Esophagus muscularis mucosa (tissue), 4 donors: ENCODE measurements at regions of chr15 and their contacts with region 1.

Region 1: DNA sequence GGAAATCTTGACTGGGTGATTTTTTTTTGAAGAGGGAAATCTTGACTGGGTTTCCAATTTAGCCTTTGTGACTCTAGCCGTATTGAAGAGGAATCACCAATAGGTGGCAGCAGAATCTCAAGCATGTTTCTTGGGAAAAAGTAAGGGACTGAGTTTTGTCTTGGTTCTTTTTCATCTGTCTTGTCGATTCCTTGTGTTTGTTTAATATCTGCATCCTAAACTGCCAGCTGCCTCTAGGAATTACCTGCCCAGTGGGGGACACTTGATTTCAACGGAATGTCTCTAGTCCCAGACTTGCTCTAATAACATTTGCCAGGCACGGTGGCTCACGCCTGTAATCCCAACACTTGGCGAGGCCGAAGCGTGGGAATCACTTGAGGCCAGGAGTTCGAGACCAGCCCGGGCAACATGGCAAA is 89.2 kb downstream of the RBPMS2 start:
- DNase-seq: no peak
- H3K4me3 ChIP-seq: no peak overlapping the region
- H3K27ac ChIP-seq: peak overlapping the region; percentile 22 to 85 (median 44)
- H3K4me1 ChIP-seq: peaks cover 45 to 78% (median 57%) of the 10 kb centered on the region in 4 donors
- H3K27me3 ChIP-seq: no peaks in the 10 kb centered on the region
- CTCF ChIP-seq: peak; percentile 59 to 84 (median 70)
- EP300 ChIP-seq: no peak
- POLR2A ChIP-seq: no peak

Region 2: DNA sequence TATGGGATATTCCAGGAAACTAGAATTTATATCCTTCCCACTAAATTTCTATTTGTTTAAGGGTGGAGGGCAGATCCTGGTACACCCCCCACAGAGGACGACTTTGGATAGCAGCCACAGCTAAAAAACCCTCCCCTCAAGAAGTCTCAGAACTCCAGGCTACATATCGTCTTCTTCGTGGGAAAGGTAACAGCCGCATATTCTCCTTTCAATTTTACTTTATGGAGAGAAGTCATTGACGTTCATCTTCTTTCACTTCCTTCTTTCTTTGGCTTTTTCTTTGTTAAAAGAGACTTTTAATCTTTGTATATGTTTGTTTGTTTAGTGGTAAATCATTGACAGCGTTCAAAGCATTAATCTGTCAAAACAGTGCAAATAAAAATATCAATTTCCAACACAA is 262.3 kb before region 1 on chr15:
- intact Hi-C with region 1: loop called (anchors 2 kb)
- DNase-seq: no peak
- H3K4me3 ChIP-seq: no peak overlapping the region
- H3K27ac ChIP-seq: no peak overlapping the region
- H3K4me1 ChIP-seq: peaks cover 0 to 10% (median 4%) of the 10 kb centered on the region in 4 donors
- H3K27me3 ChIP-seq: no peaks in the 10 kb centered on the region
- CTCF ChIP-seq: no peak
- EP300 ChIP-seq: no peak
- POLR2A ChIP-seq: no peak

Region 3: DNA sequence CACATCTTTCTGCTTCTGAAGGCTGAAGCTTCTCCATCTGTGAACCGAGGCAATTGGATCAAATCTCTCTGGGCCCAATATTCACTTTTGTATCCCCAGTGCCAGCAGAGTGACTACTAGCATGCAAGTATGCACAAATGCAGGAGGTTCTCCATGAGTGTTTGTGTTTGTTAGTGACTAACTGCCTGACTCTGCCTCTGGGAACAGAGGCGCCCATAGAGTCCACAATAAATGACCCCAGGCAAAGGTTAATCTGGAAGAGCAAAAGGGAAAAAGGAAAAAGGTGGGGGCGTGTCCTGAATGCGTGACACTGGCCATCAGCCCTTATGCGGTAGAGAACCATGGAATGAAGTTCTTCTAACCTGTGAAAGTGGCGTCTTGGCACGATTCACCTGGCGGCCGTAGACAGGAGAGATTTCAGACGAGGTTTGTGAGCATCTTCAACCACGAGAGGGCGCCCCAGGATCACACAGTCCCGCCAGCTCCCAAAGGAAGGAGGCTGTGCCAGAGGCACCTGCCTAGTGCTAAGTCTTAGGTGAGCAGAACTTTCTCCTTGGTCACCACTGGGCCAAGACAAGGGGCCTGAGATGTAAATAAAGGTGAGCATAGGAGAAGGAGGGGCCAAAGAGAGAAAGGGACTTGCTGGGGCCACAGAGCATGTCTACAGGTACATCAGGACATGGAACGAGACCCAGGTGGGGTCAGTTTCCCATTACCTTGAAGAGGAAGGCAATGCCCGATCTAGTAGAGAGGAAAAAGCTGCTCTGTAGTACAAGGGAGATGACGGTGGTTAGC is 45.0 kb after region 1 on chr15:
- intact Hi-C with region 1: loop called (anchors 1 kb)
- DNase-seq: no peak
- H3K4me3 ChIP-seq: no peak overlapping the region
- H3K27ac ChIP-seq: peak overlapping the region; percentile 29 to 65 (median 56)
- H3K4me1 ChIP-seq: peaks cover 8 to 29% (median 24%) of the 10 kb centered on the region in 4 donors
- H3K27me3 ChIP-seq: no peaks in the 10 kb centered on the region
- CTCF ChIP-seq: peak; percentile 84 to 91 (median 90)
- EP300 ChIP-seq: no peak
- POLR2A ChIP-seq: no peak

Region 4: DNA sequence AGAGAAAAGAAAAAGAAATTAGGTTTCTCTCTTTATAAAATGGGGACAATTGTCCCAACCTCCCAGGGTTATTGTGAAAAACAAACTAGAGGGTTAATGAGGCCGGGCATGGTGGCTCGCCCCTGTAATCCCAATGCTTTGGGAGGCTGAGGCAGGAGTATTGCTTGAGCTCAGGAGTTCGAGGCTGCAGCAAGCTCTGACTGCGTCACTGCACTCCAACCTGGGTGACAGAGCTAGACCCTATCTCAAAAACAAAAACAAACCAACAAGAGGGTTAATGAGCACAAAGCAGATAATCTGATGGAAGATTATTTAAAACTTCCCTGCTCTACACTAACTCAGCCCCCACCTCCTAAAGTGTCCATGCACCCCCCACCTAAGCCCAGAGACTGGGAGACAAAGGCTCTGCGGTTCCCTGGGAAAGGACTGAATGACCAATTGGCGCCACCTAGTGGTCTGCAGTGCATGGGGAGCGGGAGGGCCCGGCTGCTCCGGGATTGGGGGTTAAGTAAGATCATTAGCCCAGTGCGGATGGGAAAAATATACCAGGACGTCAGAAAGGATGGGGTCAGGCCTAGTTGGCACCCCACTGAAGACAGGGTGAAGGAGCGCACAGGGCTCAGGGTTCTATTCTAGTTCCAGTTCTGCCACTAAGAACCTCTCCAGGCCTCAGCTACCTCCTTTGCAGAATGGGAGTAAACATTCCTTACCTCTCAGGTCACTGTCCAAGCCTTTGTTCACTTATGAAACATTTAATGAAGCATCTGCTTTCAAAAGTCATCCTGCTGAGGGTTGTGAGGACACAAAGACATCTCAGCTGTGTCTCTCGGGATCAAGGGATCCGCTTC is 123.6 kb after region 1 on chr15:
- intact Hi-C with region 1: loop called (anchors 5 kb)
- DNase-seq: no peak
- H3K4me3 ChIP-seq: no peak overlapping the region
- H3K27ac ChIP-seq: peak overlapping the region; percentile 90 to 93 (median 92)
- H3K4me1 ChIP-seq: peaks cover 8 to 53% (median 45%) of the 10 kb centered on the region in 4 donors
- H3K27me3 ChIP-seq: no peaks in the 10 kb centered on the region
- CTCF ChIP-seq: peak in 2 of 3 experiments; percentile 95 to 96
- EP300 ChIP-seq: no peak
- POLR2A ChIP-seq: no peak

Region 5: DNA sequence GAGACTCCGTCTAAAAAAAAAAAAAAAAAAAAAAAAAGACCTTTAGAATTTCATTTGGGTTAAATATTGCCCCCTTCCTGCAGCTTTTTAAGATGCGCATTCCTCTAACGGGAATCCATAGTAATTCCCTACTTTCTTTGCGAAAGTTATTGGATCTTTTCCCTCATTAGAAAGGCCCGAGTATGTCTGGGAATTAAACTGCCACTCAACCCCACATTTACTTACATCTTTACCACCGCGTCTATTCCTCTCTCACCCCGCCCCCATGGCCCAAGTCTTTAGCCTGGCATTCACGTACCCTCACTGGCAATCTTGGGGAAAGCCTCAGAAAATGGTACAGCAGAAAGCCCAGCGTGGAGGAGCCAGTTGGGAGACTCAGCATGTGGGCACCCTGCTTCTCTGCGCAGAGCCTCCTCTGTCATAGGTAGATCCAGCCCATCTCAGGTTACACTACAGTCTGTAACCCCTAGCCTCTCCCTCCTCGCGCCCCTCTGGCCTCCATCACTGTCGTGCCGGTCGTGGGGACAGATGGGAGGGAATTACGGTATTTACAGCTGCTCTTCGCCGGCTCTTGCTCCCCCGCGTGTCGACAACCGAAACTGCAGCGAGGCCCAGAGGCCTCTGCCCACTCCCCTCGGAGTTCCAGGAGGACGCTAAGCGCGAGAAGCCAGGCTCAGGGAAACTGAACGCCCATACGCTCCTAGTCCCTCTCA is 219.1 kb after region 1 on chr15:
- intact Hi-C with region 1: loop called (anchors 5 kb)
- DNase-seq: peak; percentile 95
- H3K4me3 ChIP-seq: peak overlapping the region; percentile 39 to 50 (median 48)
- H3K27ac ChIP-seq: peak overlapping the region in 3 of 4 donors; percentile 30 to 61 (median 38)
- H3K4me1 ChIP-seq: peaks cover 0 to 13% (median 11%) of the 10 kb centered on the region in 4 donors
- H3K27me3 ChIP-seq: no peaks in the 10 kb centered on the region
- CTCF ChIP-seq: peak; percentile 90 to 100 (median 95)
- EP300 ChIP-seq: no peak
- POLR2A ChIP-seq: no peak